Activated T-helper 1 cell treated with anti-CD3 and anti-CD28 coated beads, Interleukin-12 subunit alpha, Interleukin-12 subunit beta, Interleukin-2, Interleukin-4 antibody, amounts not matched to agents 30 ng/mL and 10 ng/mL and 1 ng/mL, durations not matched to agents 14 hours and 24 hours and 36 hours (primary cell): ENCODE measurements at regions of chr9 and their contacts with region 1.

Region 1: DNA sequence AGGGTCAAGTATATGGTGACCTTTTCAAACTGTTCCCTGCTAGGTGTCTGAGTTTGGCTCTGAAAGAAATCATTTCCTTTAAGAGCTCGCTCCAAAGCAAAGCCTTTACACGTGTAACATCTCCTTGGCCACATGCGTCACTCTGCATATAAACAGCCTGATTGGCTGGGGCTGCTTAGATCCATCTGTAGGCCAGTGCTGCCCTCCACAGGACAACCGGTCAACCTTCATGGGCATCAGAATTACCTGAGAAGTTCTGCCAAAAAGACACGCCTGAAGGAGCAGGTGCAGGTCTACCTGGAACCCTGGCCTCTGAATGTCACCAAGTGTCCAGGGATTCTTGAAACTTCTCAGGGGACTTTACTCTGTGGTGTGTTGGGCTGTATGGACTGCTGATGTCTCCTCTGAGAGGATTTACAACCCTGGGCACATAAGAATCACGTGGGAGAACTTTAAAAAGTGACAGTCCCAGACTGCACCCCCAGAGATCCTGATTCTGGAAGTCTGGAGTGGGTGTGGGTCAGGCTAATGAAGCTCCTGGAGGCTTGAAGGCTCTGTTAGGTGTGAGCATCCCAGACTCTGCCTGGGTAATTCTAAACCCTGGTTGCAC is 497.6 kb downstream of the GADD45G start:
- DNase-seq: peak; percentile 75
- H3K4me3 Mint-ChIP-seq: no peak overlapping the region
- H3K27ac Mint-ChIP-seq: peak overlapping the region; percentile 31
- H3K4me1 Mint-ChIP-seq: peaks cover 18% of the 10 kb centered on the region
- H3K27me3 Mint-ChIP-seq: peaks cover 7% of the 10 kb centered on the region

Region 2: GRCh38 chr9:89576404-89576839 is 526.0 kb before region 1 on chr9:
- intact Hi-C with region 1: loop called (anchors 1 kb)
- DNase-seq: no peak
- H3K4me3 Mint-ChIP-seq: no peak overlapping the region
- H3K27ac Mint-ChIP-seq: no peak overlapping the region
- H3K4me1 Mint-ChIP-seq: peaks cover 25% of the 10 kb centered on the region
- H3K27me3 Mint-ChIP-seq: peaks cover 63% of the 10 kb centered on the region

Region 3: GRCh38 chr9:89743573-89744361 is 358.6 kb before region 1 on chr9:
- intact Hi-C with region 1: loop called (anchors 2 kb)
- DNase-seq: peak; percentile 75
- H3K4me3 Mint-ChIP-seq: peak overlapping the region; percentile 25
- H3K27ac Mint-ChIP-seq: peak overlapping the region; percentile 82
- H3K4me1 Mint-ChIP-seq: peaks cover 90% of the 10 kb centered on the region
- H3K27me3 Mint-ChIP-seq: no peaks in the 10 kb centered on the region

Region 4: GRCh38 chr9:89919169-89919681 is 183.2 kb before region 1 on chr9:
- intact Hi-C with region 1: loop called (anchors 1 kb)
- DNase-seq: peak; percentile 41
- H3K4me3 Mint-ChIP-seq: peak overlapping the region; percentile 16
- H3K27ac Mint-ChIP-seq: no peak overlapping the region
- H3K4me1 Mint-ChIP-seq: peaks cover 51% of the 10 kb centered on the region
- H3K27me3 Mint-ChIP-seq: peaks cover 2% of the 10 kb centered on the region

Region 5: GRCh38 chr9:89984214-89984613 is 118.2 kb before region 1 on chr9:
- intact Hi-C with region 1: loop called (anchors 1 kb)
- DNase-seq: no peak
- H3K4me3 Mint-ChIP-seq: peak overlapping the region; percentile 61
- H3K27ac Mint-ChIP-seq: peak overlapping the region; percentile 93
- H3K4me1 Mint-ChIP-seq: peaks cover 67% of the 10 kb centered on the region
- H3K27me3 Mint-ChIP-seq: peaks cover 2% of the 10 kb centered on the region

Region 6: DNA sequence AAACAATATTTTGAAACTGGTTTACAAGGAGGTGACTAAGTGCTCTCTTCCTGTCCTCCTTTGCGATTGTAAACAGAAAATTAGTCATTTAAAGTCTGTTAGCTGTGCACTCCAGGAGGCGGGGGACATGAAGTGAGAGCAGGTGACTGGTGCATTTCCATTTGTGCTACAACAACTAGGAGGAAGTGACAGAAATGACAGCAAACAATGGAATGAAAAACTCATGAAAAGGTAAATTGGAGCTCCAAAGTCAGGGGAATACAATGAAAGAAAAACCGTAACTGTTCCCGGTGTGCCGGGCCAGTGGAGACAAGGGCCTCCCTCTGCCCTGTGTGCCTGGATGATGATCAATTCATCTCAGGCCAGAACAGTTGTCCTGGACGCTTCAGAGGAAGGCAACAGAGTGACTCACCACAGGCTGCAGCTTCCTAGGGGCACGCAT is 57.7 kb before region 1 on chr9:
- intact Hi-C with region 1: loop called (anchors 1 kb)
- DNase-seq: peak; percentile 9
- H3K4me3 Mint-ChIP-seq: no peak overlapping the region
- H3K27ac Mint-ChIP-seq: peak overlapping the region; percentile 86
- H3K4me1 Mint-ChIP-seq: peaks cover 29% of the 10 kb centered on the region
- H3K27me3 Mint-ChIP-seq: no peaks in the 10 kb centered on the region